Activated CD4-positive, alpha-beta T cell treated with anti-CD3 and anti-CD28 coated beads for 36 hours (primary cell): ENCODE measurements at regions of chr12 and their contacts with region 1.

Region 1: DNA sequence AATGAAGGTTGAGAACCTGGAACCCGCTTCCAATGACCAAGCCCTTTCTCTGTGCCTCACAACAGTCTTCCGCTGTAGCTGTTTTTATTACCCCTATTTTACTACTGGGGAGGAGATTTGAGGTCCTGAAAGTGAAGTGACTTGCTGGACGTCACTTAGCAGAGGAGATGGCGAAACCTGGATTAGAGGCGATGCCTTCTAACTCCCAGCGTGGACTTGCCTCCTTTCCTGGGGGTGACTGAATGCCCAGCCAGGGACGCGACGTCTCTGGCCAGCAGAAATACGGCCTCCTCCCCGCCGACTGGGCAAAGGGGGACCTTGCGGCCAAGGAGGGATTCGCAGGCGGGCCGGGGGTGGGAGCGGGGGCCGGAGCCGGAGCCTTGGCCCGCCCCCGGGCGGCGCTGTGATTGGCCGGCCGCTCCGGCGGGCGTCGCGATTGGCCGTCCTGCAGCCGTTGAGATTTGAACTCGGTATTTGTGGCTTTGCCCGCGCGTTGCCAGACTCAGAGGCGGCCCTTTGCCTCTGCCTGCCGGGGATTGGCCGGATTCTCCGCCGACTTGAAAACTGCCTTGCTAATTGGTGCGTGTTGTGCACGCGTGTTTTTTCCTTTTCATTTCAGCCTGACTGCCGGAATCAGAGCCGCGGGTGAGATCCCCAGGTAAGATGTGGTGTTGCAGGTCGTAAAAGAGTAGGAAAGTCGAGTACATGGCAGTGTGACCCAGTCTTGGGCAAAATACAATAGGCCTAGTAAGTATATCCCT is at the start of gene NCAPD2:
- DNase-seq: peak; percentile 98
- ATAC-seq: peak; percentile 89
- H3K4me3 Mint-ChIP-seq: peak within 1 kb of the TSS; percentile 94
- H3K27ac Mint-ChIP-seq: peak within 1 kb of the TSS; percentile 98
- H3K4me1 Mint-ChIP-seq: peaks cover 35% of the 10 kb centered on the region
- H3K27me3 Mint-ChIP-seq: no peaks in the 10 kb centered on the region
- total RNA-seq, gene NCAPD2: 199 to 210 TPM

Region 2: GRCh38 chr12:6430124-6430989 is 63.3 kb before region 1 on chr12:
- CTCF ChIA-PET with region 1: interaction called, 16 read pairs
- POLR2A ChIA-PET with region 1: interaction called, 3 read pairs
- intact Hi-C with region 1: loop called in 1 of 2 experiments (anchors 1 kb)
- DNase-seq: peak; percentile 84
- ATAC-seq: no peak
- H3K4me3 Mint-ChIP-seq: peak overlapping the region; percentile 1
- H3K27ac Mint-ChIP-seq: peak overlapping the region; percentile 80
- H3K4me1 Mint-ChIP-seq: peaks cover 80% of the 10 kb centered on the region
- H3K27me3 Mint-ChIP-seq: no peaks in the 10 kb centered on the region

Region 3: DNA sequence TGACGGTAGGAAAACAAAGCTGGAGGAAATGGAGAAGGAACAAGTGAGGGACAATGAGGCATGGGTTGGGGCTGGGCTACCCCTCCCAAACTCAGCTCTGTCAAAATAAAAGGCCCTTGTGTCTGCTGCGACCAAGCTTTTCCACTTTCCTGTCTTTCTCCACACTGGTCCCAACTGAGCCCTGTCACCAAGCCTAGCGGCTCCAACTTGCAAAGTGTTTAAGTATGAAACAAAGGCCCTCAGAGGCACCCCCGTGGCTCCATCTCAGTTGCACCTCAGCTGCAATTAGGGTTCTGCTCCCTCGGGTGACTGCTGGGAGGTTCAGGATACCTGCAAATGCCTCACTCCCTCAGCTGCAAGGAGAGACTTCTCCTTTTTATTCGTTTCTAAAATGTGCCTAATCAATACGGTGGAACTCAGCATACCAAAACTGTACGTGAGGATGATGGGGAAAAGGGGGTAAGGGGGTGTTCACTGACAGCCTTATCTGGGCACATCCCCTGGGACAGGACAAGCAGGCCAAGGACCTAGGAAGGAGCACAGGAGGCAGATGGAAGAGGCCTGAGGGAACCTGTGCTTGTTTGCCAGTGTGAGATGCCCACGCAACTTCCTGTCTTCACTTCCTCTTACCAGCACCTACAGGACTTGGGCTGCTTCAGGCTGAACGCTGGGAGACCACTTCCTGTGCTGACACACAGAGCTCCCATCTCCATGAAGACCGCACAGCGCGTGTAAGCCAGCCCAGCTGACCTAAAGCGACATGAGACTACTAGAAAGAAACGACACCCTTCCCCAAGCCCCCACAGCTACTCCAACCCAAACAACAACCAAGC is 32.1 kb before region 1 on chr12:
- CTCF ChIA-PET with region 1: interaction called, 15 read pairs
- POLR2A ChIA-PET with region 1: interaction called, 11 read pairs
- intact Hi-C with region 1: no loop called
- DNase-seq: peak; percentile 92
- ATAC-seq: peak; percentile 81
- H3K4me3 Mint-ChIP-seq: peak overlapping the region; percentile 75
- H3K27ac Mint-ChIP-seq: peak overlapping the region; percentile 100
- H3K4me1 Mint-ChIP-seq: peaks cover 86% of the 10 kb centered on the region
- H3K27me3 Mint-ChIP-seq: no peaks in the 10 kb centered on the region

Region 4: GRCh38 chr12:6563448-6564050 is 69.9 kb after region 1 on chr12:
- CTCF ChIA-PET with region 1: no interaction called
- POLR2A ChIA-PET with region 1: no interaction called
- intact Hi-C with region 1: loop called in 1 of 2 experiments (anchors 1 kb)
- DNase-seq: peak; percentile 82
- ATAC-seq: peak; percentile 37
- H3K4me3 Mint-ChIP-seq: no peak overlapping the region
- H3K27ac Mint-ChIP-seq: peak overlapping the region; percentile 17
- H3K4me1 Mint-ChIP-seq: peaks cover 40% of the 10 kb centered on the region
- H3K27me3 Mint-ChIP-seq: no peaks in the 10 kb centered on the region

Region 5: GRCh38 chr12:6723607-6724396 is 230.1 kb after region 1 on chr12 and contains the start of gene COPS7A:
- CTCF ChIA-PET with region 1: interaction called, 4 read pairs
- POLR2A ChIA-PET with region 1: interaction called, 3 read pairs
- intact Hi-C with region 1: loop called in 1 of 2 experiments (anchors 1 kb)
- DNase-seq: peak; percentile 98
- ATAC-seq: peak; percentile 96
- H3K4me3 Mint-ChIP-seq: peak within 1 kb of the TSS; percentile 80
- H3K27ac Mint-ChIP-seq: peak within 1 kb of the TSS; percentile 97
- H3K4me1 Mint-ChIP-seq: peaks cover 18% of the 10 kb centered on the region
- H3K27me3 Mint-ChIP-seq: no peaks in the 10 kb centered on the region
- total RNA-seq, gene COPS7A: 38.3 to 41.6 TPM